ENCODE measurements at regions of chr9 and their contacts with region 1.

Region 1: DNA sequence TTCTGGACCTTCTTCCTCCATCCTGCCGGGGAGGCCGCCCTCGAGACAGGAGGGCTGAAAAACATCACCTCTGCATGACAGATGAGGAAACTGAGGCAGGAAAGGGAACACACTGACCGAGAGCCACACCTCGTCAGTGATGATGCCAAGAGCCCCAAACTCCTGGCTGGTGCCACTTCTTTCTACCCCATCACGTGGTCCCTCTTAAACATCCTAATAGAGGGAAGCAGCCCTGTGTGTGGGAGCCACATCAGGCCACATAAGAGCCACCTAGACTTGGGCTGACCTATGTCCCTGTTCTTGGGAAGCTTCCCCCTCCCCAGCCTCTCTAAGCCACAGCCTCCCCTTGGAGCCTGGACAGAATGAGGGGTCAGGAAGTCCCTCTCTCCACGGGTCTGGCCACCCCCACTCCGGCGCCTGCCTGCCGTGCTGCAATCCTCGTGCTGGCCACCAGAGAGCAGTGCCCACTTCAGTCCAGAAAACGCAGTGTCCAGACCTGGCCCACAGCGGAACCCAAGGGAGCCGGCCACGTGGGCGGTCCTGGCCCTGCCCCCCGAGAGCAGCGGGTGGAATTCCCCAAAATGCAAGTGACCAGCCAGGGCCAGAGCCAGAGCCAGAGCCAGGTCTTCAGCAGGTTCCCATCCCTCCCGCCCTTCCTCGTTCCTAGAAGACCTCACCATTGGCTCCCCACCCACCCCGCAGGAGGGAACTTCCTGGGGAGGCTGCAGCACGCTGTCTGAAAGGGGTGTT is 54.7 kb upstream of the SARDH start:
- DNase-seq: peak; percentile 19 to 72 (median 54)
- ATAC-seq: peak; percentile 77
- H3K4me3 ChIP-seq: no peak overlapping the region
- H3K4me3 Mint-ChIP-seq: no peak overlapping the region
- H3K27ac ChIP-seq: no peak overlapping the region
- H3K27ac Mint-ChIP-seq: no peak overlapping the region
- H3K4me1 ChIP-seq: no peaks in the 10 kb centered on the region
- H3K4me1 Mint-ChIP-seq: peaks cover 2% of the 10 kb centered on the region
- H3K27me3 ChIP-seq: peaks cover 0 to 3% of the 10 kb centered on the region in 2 experiments
- H3K27me3 Mint-ChIP-seq: peaks cover 2% of the 10 kb centered on the region
- CTCF ChIP-seq: peak; percentile 87

Region 2: GRCh38 chr9:133782157-133783130 is 10.5 kb before region 1 on chr9:
- CTCF ChIA-PET with region 1: interaction called, 23 read pairs
- POLR2A ChIA-PET with region 1: no interaction called
- intact Hi-C with region 1: no loop called
- DNase-seq: peak; percentile 44 to 77 (median 67)
- ATAC-seq: peak; percentile 57
- H3K4me3 ChIP-seq: no peak overlapping the region
- H3K4me3 Mint-ChIP-seq: no peak overlapping the region
- H3K27ac ChIP-seq: no peak overlapping the region
- H3K27ac Mint-ChIP-seq: no peak overlapping the region
- H3K4me1 ChIP-seq: no peaks in the 10 kb centered on the region
- H3K4me1 Mint-ChIP-seq: no peaks in the 10 kb centered on the region
- H3K27me3 ChIP-seq: no peaks in the 10 kb centered on the region
- H3K27me3 Mint-ChIP-seq: no peaks in the 10 kb centered on the region
- CTCF ChIP-seq: peak; percentile 64

Region 3: GRCh38 chr9:133803028-133803585 is 10.2 kb after region 1 on chr9:
- CTCF ChIA-PET with region 1: interaction called, 15 read pairs
- POLR2A ChIA-PET with region 1: no interaction called
- intact Hi-C with region 1: no loop called
- DNase-seq: no peak
- ATAC-seq: no peak
- H3K4me3 ChIP-seq: no peak overlapping the region
- H3K4me3 Mint-ChIP-seq: no peak overlapping the region
- H3K27ac ChIP-seq: no peak overlapping the region
- H3K27ac Mint-ChIP-seq: no peak overlapping the region
- H3K4me1 ChIP-seq: no peaks in the 10 kb centered on the region
- H3K4me1 Mint-ChIP-seq: no peaks in the 10 kb centered on the region
- H3K27me3 ChIP-seq: no peaks in the 10 kb centered on the region
- H3K27me3 Mint-ChIP-seq: no peaks in the 10 kb centered on the region
- CTCF ChIP-seq: no peak

Region 4: DNA sequence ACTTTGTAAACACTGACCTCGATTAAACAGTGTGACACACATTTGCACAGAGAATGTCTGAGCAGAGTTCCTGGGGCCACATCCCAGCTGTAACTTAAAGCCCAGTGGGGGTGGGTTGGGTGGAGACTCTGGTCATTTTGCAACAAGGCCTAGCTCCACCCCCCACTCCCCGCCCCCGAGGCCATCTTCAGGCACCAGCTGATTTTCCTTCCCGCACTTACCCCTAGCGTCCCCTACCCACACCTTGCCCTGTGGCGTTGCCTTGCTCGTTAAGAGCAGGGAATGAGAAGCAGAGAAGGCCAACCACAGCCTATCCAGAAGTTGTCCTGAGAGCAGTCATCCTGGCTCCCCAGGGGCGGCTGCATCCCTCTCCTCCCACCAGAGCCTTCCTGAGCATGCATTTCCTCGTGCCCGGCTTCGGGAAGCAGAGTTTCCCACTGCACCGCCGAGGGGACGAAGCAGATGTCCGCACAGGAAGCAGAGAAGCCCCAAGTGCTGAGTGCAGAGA is 47.0 kb after region 1 on chr9:
- CTCF ChIA-PET with region 1: no interaction called
- POLR2A ChIA-PET with region 1: no interaction called
- intact Hi-C with region 1: no loop called
- DNase-seq: no peak
- ATAC-seq: no peak
- H3K4me3 ChIP-seq: no peak overlapping the region
- H3K4me3 Mint-ChIP-seq: no peak overlapping the region
- H3K27ac ChIP-seq: no peak overlapping the region
- H3K27ac Mint-ChIP-seq: no peak overlapping the region
- H3K4me1 ChIP-seq: no peaks in the 10 kb centered on the region
- H3K4me1 Mint-ChIP-seq: no peaks in the 10 kb centered on the region
- H3K27me3 ChIP-seq: no peaks in the 10 kb centered on the region
- H3K27me3 Mint-ChIP-seq: no peaks in the 10 kb centered on the region
- CTCF ChIP-seq: no peak

Region 5: DNA sequence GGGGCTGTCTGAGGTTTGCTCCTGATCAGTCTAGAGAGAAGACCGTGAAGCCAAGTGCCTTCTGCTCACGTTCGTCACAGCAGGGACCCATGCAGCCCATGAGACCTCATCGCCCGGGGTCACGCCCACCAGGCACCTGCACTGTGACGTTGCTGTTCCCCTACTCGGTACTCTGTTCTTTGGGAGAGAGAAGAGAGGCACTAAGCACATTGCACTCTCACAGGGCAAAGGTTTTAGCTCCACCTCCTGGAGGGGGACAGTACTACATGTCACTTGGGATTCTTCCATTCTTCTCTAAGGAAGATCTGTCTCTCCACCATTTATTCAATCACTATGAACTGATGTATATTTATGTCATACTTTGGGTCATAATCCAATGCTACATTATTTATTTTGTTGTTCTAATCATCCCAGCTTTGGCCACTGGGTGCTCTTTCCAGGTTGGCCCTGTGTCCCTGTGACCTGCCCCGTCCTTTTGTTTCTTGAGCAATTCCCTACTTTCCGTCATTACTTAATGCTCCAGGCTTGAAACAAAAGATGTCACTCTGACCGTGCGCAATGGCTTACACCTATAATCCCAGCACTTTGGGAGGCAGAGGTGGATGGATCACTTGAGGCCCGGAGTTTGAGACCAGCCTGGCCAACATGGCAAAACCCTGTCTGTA is 306.4 kb after region 1 on chr9:
- CTCF ChIA-PET with region 1: interaction called, 4 read pairs
- POLR2A ChIA-PET with region 1: no interaction called
- intact Hi-C with region 1: loop called (anchors 1 kb)
- DNase-seq: peak; percentile 24 to 73 (median 62)
- ATAC-seq: peak; percentile 99
- H3K4me3 ChIP-seq: no peak overlapping the region
- H3K4me3 Mint-ChIP-seq: no peak overlapping the region
- H3K27ac ChIP-seq: no peak overlapping the region
- H3K27ac Mint-ChIP-seq: no peak overlapping the region
- H3K4me1 ChIP-seq: no peaks in the 10 kb centered on the region
- H3K4me1 Mint-ChIP-seq: no peaks in the 10 kb centered on the region
- H3K27me3 ChIP-seq: peaks cover 0 to 8% of the 10 kb centered on the region in 2 experiments
- H3K27me3 Mint-ChIP-seq: peaks cover 15% of the 10 kb centered on the region
- CTCF ChIP-seq: peak; percentile 90